ENCODE measurements at regions of chr6 and their contacts with region 1.

Region 1: GRCh38 chr6:138817822-138818308 is 22.0 kb downstream of the ECT2L start:
- DNase-seq: no peak
- H3K4me3 Mint-ChIP-seq: no peak overlapping the region
- H3K27ac Mint-ChIP-seq: peak overlapping the region; percentile 78
- H3K4me1 Mint-ChIP-seq: peaks cover 36% of the 10 kb centered on the region
- H3K27me3 Mint-ChIP-seq: no peaks in the 10 kb centered on the region

Region 2: GRCh38 chr6:138873191-138873590 is 55.3 kb after region 1 on chr6:
- intact Hi-C with region 1: loop called (anchors 5 kb)
- DNase-seq: no peak
- H3K4me3 Mint-ChIP-seq: no peak overlapping the region
- H3K27ac Mint-ChIP-seq: no peak overlapping the region
- H3K4me1 Mint-ChIP-seq: peaks cover 5% of the 10 kb centered on the region
- H3K27me3 Mint-ChIP-seq: peaks cover 1% of the 10 kb centered on the region

Region 3: DNA sequence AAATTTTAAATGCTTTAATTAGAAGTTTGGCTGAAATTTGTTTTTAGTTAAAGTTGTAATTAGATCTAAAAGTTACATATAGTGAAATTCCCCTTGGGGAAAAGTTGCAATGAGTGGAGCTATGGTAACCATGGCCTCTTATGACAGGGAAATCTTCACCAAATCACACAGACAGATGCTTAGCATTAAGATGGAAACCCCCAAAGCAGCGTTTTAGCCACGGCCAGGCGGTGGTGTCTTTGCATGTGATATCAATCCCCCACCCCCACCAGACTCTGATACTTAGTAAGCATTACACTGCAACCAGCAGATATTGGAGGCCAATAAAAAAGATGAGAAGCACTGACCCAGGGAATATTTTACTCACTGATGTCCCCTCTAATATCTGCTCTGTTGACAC is 94.4 kb after region 1 on chr6:
- intact Hi-C with region 1: loop called (anchors 5 kb)
- DNase-seq: no peak
- H3K4me3 Mint-ChIP-seq: no peak overlapping the region
- H3K27ac Mint-ChIP-seq: no peak overlapping the region
- H3K4me1 Mint-ChIP-seq: no peaks in the 10 kb centered on the region
- H3K27me3 Mint-ChIP-seq: no peaks in the 10 kb centered on the region

Region 4: GRCh38 chr6:138987640-138988468 is 170.0 kb after region 1 on chr6 and contains the start of gene REPS1:
- intact Hi-C with region 1: loop called (anchors 1 kb)
- DNase-seq: peak; percentile 88
- H3K4me3 Mint-ChIP-seq: peak within 1 kb of the TSS; percentile 89
- H3K27ac Mint-ChIP-seq: peak within 1 kb of the TSS; percentile 92
- H3K4me1 Mint-ChIP-seq: peaks cover 7% of the 10 kb centered on the region
- H3K27me3 Mint-ChIP-seq: no peaks in the 10 kb centered on the region
- total RNA-seq, gene REPS1: 69.6 and 74.6 TPM in 2 replicates

Region 5: DNA sequence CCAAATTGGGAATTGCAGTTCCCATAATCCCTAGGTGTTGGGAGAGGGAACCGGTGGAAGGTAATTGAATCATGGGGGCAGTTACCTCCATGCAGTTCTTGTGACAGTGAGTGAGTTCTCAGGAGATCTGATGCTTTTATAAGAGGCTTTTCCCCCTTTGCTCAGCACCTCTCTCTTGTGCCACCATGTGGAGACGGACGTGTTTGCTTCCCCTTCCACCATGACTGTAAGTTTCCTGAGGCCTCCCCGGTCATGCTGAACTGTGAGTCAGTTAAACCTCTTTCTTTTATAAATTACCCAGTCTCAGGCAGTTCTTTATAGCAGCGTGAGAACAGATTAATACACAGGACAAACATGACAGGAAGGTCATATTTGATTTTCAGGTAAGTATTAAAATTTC is 291.7 kb after region 1 on chr6:
- intact Hi-C with region 1: loop called (anchors 2 kb)
- DNase-seq: no peak
- H3K4me3 Mint-ChIP-seq: no peak overlapping the region
- H3K27ac Mint-ChIP-seq: no peak overlapping the region
- H3K4me1 Mint-ChIP-seq: peaks cover 22% of the 10 kb centered on the region
- H3K27me3 Mint-ChIP-seq: no peaks in the 10 kb centered on the region

Region 6: DNA sequence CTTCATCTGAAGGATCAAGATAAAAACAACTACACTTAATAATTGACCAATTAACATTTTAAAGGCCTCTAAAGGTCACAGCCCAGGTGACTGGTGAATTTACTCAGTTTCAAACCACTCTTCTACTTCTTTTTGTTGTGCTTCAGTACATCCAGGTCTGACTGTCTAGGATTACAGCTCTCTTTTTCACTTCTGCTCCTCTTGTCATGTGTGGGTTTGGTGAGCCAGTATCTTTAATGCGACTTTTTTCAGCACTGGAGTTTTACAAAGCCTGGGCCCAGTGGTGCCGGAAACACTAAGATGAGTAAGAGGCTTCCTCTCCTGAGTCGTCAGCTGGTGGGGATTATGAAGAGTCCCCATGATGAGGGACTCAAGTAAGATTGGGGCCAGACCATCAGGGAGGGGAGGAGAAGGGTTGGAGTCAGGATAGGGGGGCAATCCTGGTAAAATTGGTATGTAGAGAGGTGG is 344.0 kb after region 1 on chr6:
- intact Hi-C with region 1: loop called (anchors 5 kb)
- DNase-seq: peak; percentile 72
- H3K4me3 Mint-ChIP-seq: peak overlapping the region; percentile 68
- H3K27ac Mint-ChIP-seq: peak overlapping the region; percentile 97
- H3K4me1 Mint-ChIP-seq: peaks cover 71% of the 10 kb centered on the region
- H3K27me3 Mint-ChIP-seq: no peaks in the 10 kb centered on the region

Region 7: DNA sequence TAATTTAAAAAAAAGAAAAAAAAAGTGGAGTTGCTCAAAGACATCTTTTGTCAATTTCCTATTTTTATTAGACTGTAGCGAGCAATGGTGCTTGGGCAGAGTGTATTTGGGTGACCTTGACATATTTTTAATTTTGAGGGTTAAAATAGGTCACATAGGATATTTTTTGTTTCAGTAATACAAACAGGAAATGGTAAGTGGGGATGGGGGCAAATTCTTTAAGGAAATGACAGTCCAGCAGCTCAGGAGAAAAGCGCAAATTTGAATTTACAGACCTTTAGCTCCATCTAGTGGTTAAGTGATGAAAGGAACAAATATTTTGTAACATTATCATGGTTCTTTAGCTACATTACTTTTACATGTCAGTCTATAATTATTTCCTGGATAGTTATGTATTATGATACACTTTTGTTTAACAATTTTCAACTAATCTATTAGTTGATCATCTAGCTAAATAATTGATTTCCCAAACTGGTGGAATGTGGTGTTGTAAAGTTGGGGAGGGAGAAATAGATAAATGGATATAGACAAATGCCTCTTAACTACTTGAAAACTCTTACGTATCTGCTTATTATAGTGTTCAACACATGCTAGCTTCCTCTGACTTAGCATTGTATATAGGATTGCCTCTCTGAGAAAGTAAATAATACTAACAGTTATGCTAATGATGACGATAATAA is 546.6 kb after region 1 on chr6:
- intact Hi-C with region 1: loop called (anchors 1 kb)
- DNase-seq: no peak
- H3K4me3 Mint-ChIP-seq: no peak overlapping the region
- H3K27ac Mint-ChIP-seq: no peak overlapping the region
- H3K4me1 Mint-ChIP-seq: peaks cover 47% of the 10 kb centered on the region
- H3K27me3 Mint-ChIP-seq: peaks cover 4% of the 10 kb centered on the region

Measured in activated T-helper 1 cell treated with anti-CD3 and anti-CD28 coated beads, Interleukin-12 subunit alpha, Interleukin-12 subunit beta, Interleukin-2, Interleukin-4 antibody, amounts not matched to agents 30 ng/mL and 10 ng/mL and 1 ng/mL, durations not matched to agents 14 hours and 24 hours and 36 hours (primary cell).